ENCODE measurements at regions of chr14 and their contacts with region 1.

Region 1: DNA sequence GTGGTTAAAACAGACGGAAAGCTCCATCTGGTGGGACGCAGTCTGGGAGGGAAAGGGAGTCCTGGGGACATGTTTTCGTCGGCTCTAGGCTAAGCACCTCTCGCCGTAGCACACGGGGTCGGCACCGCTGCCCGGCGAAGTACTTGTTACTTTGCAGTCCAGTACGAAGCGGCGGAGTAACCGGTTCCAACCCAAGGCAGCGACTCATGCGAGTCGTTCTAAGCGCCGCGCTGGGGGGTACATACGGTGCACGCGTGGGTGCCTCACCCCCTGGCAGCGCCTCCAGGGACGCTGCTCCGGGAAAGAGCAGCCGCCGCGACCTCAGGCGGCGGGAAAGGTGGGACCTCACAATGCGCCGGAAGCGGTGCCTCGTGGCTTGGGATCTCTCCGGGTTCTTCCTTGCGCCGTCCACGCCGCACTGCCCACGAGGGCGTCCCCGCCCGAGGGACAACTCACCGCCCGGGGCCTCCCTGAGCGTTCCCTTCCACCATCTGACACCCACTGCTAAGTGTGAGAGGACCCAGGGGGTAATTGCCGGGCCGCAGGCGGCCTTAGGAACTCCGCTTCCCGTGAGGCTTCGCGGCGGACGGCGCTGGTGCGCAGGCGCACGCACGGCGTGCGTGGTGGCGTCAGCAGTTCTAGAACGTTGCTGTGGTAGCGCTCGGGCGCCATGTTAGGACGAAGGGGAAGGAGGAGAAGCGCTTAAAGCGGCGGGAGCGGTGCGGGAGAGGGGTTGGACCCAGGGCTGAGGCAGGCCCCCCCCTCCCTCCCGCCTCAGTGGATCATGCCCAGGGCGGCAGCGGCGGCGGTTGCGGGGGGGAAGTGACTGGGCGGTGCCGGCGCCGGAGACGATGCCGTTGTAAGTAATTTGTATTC is at the start of gene PAPOLA:
- DNase-seq: peak; percentile 94 to 96
- H3K4me3 ChIP-seq: peak within 1 kb of the TSS; percentile 80 to 100
- H3K27ac ChIP-seq: peak within 1 kb of the TSS; percentile 94 to 100
- H3K4me1 ChIP-seq: peaks cover 0 to 43% (median 19%) of the 10 kb centered on the region in 4 donors
- H3K27me3 ChIP-seq: no peaks in the 10 kb centered on the region
- CTCF ChIP-seq: no peak

Region 2: GRCh38 chr14:96039633-96040311 is 462.2 kb before region 1 on chr14:
- intact Hi-C with region 1: loop called (anchors 5 kb)
- DNase-seq: peak in 1 of 2 donors; percentile 30
- H3K4me3 ChIP-seq: peak overlapping the region; percentile 71 to 83
- H3K27ac ChIP-seq: peak overlapping the region; percentile 92 to 94
- H3K4me1 ChIP-seq: peaks cover 5 to 41% (median 32%) of the 10 kb centered on the region in 4 donors
- H3K27me3 ChIP-seq: no peaks in the 10 kb centered on the region
- CTCF ChIP-seq: no peak

Region 3: GRCh38 chr14:96338551-96338950 is 163.4 kb before region 1 on chr14:
- intact Hi-C with region 1: no loop called
- DNase-seq: no peak
- H3K4me3 ChIP-seq: no peak overlapping the region
- H3K27ac ChIP-seq: no peak overlapping the region
- H3K4me1 ChIP-seq: no peaks in the 10 kb centered on the region
- H3K27me3 ChIP-seq: no peaks in the 10 kb centered on the region
- CTCF ChIP-seq: no peak

Region 4: GRCh38 chr14:96362965-96363756 is 138.8 kb before region 1 on chr14 and contains the starts of genes ATG2B and GSKIP:
- intact Hi-C with region 1: loop called (anchors 2 kb)
- DNase-seq: peak; percentile 91 to 96
- H3K4me3 ChIP-seq: peak within 1 kb of the TSS; percentile 94 to 95
- H3K27ac ChIP-seq: peak within 1 kb of the TSS; percentile 92
- H3K4me1 ChIP-seq: peaks cover 0 to 45% (median 19%) of the 10 kb centered on the region in 4 donors
- H3K27me3 ChIP-seq: no peaks in the 10 kb centered on the region
- CTCF ChIP-seq: no peak

Region 5: GRCh38 chr14:96584199-96584906 is 82.4 kb after region 1 on chr14:
- intact Hi-C with region 1: no loop called
- DNase-seq: no peak
- H3K4me3 ChIP-seq: no peak overlapping the region
- H3K27ac ChIP-seq: no peak overlapping the region
- H3K4me1 ChIP-seq: no peaks in the 10 kb centered on the region
- H3K27me3 ChIP-seq: peaks cover 0 to 36% of the 10 kb centered on the region in 2 donors
- CTCF ChIP-seq: no peak